Activated CD8-positive, alpha-beta T cell treated with anti-CD3 and anti-CD28 coated beads, Interleukin-2, amount 10 ng/mL, durations not matched to agents 7 days and 5 days (primary cell): ENCODE measurements at regions of chr5 and their contacts with region 1.

Region 1: DNA sequence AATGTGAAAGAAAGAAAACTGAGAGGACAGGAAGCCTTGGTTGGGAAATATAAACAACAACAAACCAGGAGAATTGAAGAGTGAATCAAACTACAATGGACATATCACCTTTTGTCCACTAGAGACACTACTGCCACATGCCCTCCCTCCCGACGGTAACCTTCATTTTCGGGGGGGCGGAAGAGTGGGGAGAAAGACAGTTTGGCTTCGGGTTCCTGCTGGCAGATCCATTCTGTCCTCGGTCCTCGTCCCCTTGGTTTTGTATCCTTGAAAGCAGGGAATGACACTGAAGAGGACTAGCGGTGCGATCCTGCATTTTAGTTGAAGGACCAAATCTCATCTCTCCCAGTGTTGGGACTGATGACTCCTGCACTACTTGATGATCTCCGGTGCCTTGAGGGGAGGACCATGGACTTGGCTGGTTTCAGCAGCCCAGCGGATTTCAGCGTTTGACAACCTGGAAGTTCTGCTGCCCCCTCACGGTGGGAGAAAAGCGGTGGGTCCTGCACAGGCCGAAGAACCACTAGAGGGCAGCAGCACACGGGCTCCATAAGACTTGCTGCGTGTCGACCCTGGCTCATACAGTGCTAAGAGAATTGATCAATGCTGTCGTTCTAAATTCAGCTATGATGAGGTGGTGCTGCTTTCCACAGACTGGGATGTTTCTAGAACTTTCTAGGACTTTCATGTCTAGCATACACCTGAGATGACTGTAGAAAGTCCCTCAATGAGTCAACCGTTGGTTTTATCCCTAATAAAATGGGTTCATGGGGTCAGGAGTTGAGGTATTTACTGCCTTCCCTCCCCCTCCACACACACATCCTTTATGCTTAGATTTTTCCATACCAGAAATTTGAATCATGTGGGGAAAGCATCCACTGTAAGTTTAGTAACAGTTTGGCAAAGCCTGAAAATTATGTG is 15.1 kb upstream of the ZNF131 start:
- DNase-seq: peak; percentile 93
- ATAC-seq: peak; percentile 98
- H3K4me3 Mint-ChIP-seq: peak overlapping the region; percentile 74
- H3K27ac Mint-ChIP-seq: peak overlapping the region; percentile 87
- H3K4me1 Mint-ChIP-seq: peaks cover 45% of the 10 kb centered on the region
- H3K27me3 Mint-ChIP-seq: no peaks in the 10 kb centered on the region

Region 2: GRCh38 chr5:42836070-42836769 is 269.4 kb before region 1 on chr5:
- CTCF ChIA-PET with region 1: no interaction called
- POLR2A ChIA-PET with region 1: no interaction called
- DNase-seq: no peak
- ATAC-seq: no peak
- H3K4me3 Mint-ChIP-seq: no peak overlapping the region
- H3K27ac Mint-ChIP-seq: no peak overlapping the region
- H3K4me1 Mint-ChIP-seq: no peaks in the 10 kb centered on the region
- H3K27me3 Mint-ChIP-seq: peaks cover 5% of the 10 kb centered on the region

Region 3: DNA sequence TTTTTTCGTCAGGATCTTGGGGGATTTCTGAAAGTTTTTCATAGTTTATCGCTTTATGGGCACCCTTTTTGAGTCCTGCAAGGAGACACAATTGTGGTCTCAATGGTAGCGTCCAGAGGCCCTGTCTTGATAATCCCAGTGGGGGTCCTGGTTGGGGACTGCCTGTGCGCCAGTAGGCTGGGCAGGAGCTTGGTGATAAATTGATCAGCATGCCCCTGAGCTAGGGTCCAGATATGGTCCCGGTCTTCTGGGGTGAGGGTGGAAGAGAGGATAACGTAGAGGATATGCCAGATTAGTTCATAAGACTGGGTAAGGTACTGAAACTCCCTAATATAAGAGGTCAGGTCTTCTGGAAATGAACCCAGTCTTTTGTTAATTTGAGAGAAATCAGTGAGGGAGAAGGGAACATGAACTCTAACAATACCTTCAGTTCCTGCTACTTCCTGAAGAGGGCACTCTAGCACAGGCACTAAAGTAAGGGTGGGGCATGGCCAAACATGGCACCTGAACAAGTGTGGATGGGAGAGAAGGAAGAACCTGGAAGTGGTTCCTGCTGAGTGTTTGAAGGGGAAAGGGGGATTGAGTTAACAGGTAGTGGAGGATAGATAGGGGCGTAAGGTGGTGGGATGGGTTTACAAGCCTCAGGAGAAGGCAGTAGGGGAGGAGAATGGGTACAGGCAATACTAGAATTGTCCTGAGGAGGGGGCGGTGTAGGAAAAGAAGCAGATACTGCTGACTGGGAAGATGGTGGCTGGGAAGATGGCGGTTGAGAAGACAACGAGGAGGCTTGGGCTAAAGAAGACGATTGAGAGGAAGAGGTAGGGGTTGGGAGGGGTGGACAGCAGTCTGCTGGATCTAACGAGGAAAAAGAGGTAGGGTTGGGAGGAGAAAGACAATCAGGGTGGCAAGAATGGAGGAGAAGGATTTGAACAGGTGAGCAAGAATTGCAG is 31.8 kb before region 1 on chr5:
- CTCF ChIA-PET with region 1: interaction called, 26 read pairs
- POLR2A ChIA-PET with region 1: no interaction called
- DNase-seq: peak; percentile 72
- ATAC-seq: peak; percentile 52
- H3K4me3 Mint-ChIP-seq: no peak overlapping the region
- H3K27ac Mint-ChIP-seq: peak overlapping the region; percentile 21
- H3K4me1 Mint-ChIP-seq: peaks cover 47% of the 10 kb centered on the region
- H3K27me3 Mint-ChIP-seq: no peaks in the 10 kb centered on the region

Region 4: GRCh38 chr5:43191740-43192557 is 86.3 kb after region 1 on chr5 and contains the start of gene NIM1K:
- CTCF ChIA-PET with region 1: interaction called, 21 read pairs
- POLR2A ChIA-PET with region 1: no interaction called
- DNase-seq: peak; percentile 42
- ATAC-seq: peak; percentile 76
- H3K4me3 Mint-ChIP-seq: peak within 1 kb of the TSS; percentile 77
- H3K27ac Mint-ChIP-seq: peak within 1 kb of the TSS; percentile 28
- H3K4me1 Mint-ChIP-seq: peaks cover 28% of the 10 kb centered on the region
- H3K27me3 Mint-ChIP-seq: peaks cover 21% of the 10 kb centered on the region
- total RNA-seq, gene NIM1K: 0.50 to 0.61 TPM

Region 5: GRCh38 chr5:43313035-43313853 is 207.6 kb after region 1 on chr5 and contains the start of gene HMGCS1:
- CTCF ChIA-PET with region 1: interaction called, 24 read pairs
- POLR2A ChIA-PET with region 1: no interaction called
- DNase-seq: peak; percentile 99
- ATAC-seq: peak; percentile 94
- H3K4me3 Mint-ChIP-seq: peak within 1 kb of the TSS; percentile 96
- H3K27ac Mint-ChIP-seq: peak within 1 kb of the TSS; percentile 95
- H3K4me1 Mint-ChIP-seq: peaks cover 62% of the 10 kb centered on the region
- H3K27me3 Mint-ChIP-seq: no peaks in the 10 kb centered on the region
- total RNA-seq, gene HMGCS1: 82.4 to 90.6 TPM

Region 6: GRCh38 chr5:43491324-43491723 is 385.7 kb after region 1 on chr5:
- CTCF ChIA-PET with region 1: interaction called, 10 read pairs
- POLR2A ChIA-PET with region 1: no interaction called
- DNase-seq: no peak
- ATAC-seq: no peak
- H3K4me3 Mint-ChIP-seq: no peak overlapping the region
- H3K27ac Mint-ChIP-seq: no peak overlapping the region
- H3K4me1 Mint-ChIP-seq: peaks cover 1% of the 10 kb centered on the region
- H3K27me3 Mint-ChIP-seq: no peaks in the 10 kb centered on the region

Region 7: DNA sequence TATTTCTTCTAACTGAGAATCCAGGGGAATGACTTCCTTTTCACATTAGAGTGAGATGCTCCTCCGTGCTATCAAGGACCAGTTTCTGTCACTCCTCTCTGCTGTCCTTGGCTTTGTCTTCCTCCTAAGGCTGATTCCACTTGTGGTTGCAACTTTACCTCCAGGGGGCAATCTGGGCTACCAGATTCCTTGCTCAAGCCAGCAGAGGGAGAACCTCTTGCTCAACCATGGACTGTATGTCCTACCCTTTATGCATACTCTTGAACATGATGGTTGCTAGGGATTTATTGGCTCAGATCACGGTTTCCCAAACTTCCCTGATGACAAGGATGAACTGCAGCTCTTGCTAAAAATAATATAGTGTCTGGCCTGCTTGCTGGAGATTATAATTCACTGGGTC is 521.4 kb after region 1 on chr5:
- CTCF ChIA-PET with region 1: no interaction called
- POLR2A ChIA-PET with region 1: no interaction called
- DNase-seq: no peak
- ATAC-seq: no peak
- H3K4me3 Mint-ChIP-seq: no peak overlapping the region
- H3K27ac Mint-ChIP-seq: no peak overlapping the region
- H3K4me1 Mint-ChIP-seq: peaks cover 6% of the 10 kb centered on the region
- H3K27me3 Mint-ChIP-seq: no peaks in the 10 kb centered on the region